ENCODE measurements at regions of chr13 and their contacts with region 1.

Region 1: GRCh38 chr13:112689303-112690165 is at the start of gene ATP11A:
- DNase-seq: peak; percentile 91
- ATAC-seq: peak; percentile 96
- H3K4me3 ChIP-seq: peak within 1 kb of the TSS; percentile 72
- H3K27ac ChIP-seq: peak within 1 kb of the TSS; percentile 40
- H3K4me1 ChIP-seq: peaks cover 14% of the 10 kb centered on the region
- H3K27me3 ChIP-seq: no peaks in the 10 kb centered on the region
- CTCF ChIP-seq: no peak
- POLR2A ChIP-seq: peak; percentile 92
- RAD21 ChIP-seq: peak; percentile 28; the same call in 1 of the 2 replicates
- total RNA-seq, gene ATP11A: 8.4 and 8.9 TPM in 2 replicates

Region 2: DNA sequence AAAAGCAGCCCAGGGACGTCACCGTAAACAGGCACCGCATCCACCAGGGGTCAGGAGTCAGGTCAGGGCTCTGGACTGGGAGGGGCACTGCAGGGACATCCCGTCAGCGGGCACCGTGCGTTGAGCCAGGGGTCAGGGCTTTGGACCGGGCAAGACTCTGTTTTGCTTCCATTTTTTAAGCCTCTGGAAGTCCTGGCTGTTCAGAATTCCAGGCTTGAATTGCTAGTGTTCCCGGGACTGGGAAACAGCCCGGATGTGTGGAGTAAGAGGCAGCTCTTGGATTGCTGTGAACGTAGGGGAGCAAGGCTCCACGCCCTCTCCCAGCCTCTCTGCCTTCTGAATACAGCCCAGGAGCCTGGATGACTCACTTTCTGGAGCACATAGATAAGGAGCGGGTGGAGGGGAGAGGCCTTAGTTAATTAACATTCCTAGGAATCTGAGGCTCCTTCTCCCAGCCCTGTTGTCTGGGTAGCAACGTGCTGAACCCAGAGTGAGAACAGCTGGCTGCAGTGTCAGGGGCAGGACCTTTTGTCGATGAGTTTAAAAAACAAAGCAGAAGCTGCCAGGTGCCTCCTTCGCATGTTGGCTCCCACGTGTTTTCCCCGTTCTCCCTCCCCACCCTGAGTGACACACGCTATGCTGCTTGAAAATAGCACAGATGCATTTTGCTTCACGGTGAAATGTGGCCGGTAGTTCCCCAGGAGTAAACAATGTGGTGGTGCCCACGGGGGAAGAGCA is 22.2 kb after region 1 on chr13:
- CTCF ChIA-PET with region 1: no interaction called
- POLR2A ChIA-PET with region 1: no interaction called
- dilution Hi-C with region 1: no loop called
- in situ Hi-C with region 1: no loop called
- intact Hi-C with region 1: loop called (anchors 2 kb)
- DNase-seq: peak; percentile 98
- ATAC-seq: peak; percentile 98
- H3K4me3 ChIP-seq: peak overlapping the region; percentile 9
- H3K27ac ChIP-seq: peak overlapping the region; percentile 83
- H3K4me1 ChIP-seq: peaks cover 18% of the 10 kb centered on the region
- H3K27me3 ChIP-seq: no peaks in the 10 kb centered on the region
- CTCF ChIP-seq: no peak; the same call in 1 of the 2 replicates
- POLR2A ChIP-seq: peak; percentile 55; the same call in 1 of the 2 replicates
- RAD21 ChIP-seq: no peak; the same call in 1 of the 2 replicates

Region 3: DNA sequence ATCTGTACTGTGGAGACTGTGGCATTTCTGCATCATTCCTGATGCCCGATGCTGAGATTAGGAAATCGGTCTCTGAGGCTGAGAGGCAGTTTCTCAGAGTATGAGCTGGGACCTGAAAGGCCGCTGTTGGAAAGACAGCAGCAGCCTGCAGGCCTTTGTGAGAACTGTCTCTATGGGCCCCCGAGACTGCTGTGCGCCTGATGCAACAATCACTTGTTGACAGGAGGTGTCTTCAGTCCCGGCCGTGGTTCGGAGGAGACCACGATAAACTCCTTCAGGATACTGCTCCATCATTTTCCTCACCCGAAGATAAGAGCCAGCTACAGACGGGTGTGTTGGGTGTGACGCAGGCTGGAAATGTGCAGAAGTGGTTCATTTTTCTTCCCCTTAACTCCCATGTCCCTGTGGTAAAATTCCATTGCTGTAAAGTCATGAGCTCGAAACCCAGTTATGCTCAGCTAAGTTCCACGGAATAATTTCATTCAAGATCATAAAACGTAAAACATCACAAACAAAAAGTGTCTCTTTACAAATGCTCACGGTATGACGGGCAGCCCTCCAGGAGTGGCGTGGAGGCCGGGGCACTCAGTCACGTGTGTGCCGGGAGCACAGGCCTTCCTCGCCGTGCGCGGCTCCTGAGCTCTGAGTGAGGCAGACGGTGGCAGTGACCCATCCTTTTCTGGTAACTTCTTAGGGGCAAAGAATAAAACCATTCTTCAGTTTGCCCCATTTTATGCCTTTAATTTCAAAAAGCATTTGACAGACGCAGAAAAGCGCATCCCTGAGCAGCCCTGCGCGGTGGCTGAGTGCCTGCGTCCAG is 72.9 kb after region 1 on chr13:
- CTCF ChIA-PET with region 1: no interaction called
- POLR2A ChIA-PET with region 1: no interaction called
- dilution Hi-C with region 1: no loop called
- in situ Hi-C with region 1: no loop called
- intact Hi-C with region 1: loop called (anchors 5 kb)
- DNase-seq: peak; percentile 80
- ATAC-seq: peak; percentile 71
- H3K4me3 ChIP-seq: no peak overlapping the region
- H3K27ac ChIP-seq: no peak overlapping the region; the same call in 1 of the 2 replicates
- H3K4me1 ChIP-seq: peaks cover 14% of the 10 kb centered on the region
- H3K27me3 ChIP-seq: no peaks in the 10 kb centered on the region
- CTCF ChIP-seq: 0 out of 2 replicates have a peak, but pooled peaks have one; percentile 7
- POLR2A ChIP-seq: no peak
- RAD21 ChIP-seq: peak; percentile 18; the same call in 1 of the 2 replicates

Region 4: DNA sequence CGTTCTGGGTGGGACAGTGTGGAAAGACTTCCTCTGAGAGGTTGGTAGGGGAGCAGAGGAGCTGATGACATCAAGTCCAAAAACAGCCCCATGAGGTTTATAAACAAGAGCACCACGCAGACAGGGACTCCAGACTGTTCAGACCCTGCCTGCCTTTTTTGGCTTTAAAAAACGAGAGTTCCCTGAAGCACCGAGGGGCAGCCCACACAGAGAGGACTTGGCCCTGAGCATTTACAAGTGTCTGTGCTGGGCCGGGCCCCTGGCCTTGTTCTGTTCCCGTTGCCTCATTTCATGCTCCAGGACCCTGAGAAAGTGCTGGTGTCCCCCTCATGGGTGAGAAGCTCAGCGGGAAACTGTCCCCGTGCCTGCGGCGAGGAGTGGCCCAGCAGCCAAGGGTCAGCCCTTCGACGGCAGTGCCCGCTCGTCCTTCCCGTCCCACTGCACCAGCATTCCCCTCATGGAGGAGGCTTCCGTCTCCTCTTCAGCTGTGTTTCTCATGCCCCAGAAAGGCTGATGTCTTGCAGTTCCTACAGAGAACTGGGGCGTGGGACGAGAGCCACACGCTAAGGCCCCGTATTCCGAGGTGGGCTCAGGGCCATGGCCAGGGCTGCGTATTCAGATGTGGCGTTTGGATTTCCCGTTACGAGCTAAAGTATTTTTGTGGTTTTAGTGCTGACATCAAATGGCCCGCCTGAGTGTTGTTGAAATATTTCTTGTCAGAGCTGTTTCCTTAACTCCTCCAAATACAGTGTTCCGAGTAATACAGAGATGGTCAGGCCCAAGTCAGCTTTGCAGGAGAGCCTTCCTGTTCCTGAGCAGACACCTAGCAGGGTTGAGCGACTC is 93.8 kb after region 1 on chr13:
- CTCF ChIA-PET with region 1: no interaction called
- POLR2A ChIA-PET with region 1: no interaction called
- dilution Hi-C with region 1: no loop called
- in situ Hi-C with region 1: no loop called
- intact Hi-C with region 1: loop called (anchors 5 kb)
- DNase-seq: peak; percentile 90
- ATAC-seq: peak; percentile 80
- H3K4me3 ChIP-seq: no peak overlapping the region
- H3K27ac ChIP-seq: peak overlapping the region; percentile 28
- H3K4me1 ChIP-seq: peaks cover 30% of the 10 kb centered on the region
- H3K27me3 ChIP-seq: no peaks in the 10 kb centered on the region
- CTCF ChIP-seq: no peak
- POLR2A ChIP-seq: peak; percentile 54; the same call in 1 of the 2 replicates
- RAD21 ChIP-seq: no peak

Region 5: GRCh38 chr13:112990783-112991182 is 301.2 kb after region 1 on chr13:
- CTCF ChIA-PET with region 1: no interaction called
- POLR2A ChIA-PET with region 1: no interaction called
- dilution Hi-C with region 1: no loop called
- in situ Hi-C with region 1: no loop called
- intact Hi-C with region 1: no loop called
- DNase-seq: no peak
- ATAC-seq: no peak
- H3K4me3 ChIP-seq: no peak overlapping the region
- H3K27ac ChIP-seq: no peak overlapping the region
- H3K4me1 ChIP-seq: no peaks in the 10 kb centered on the region
- H3K27me3 ChIP-seq: peaks cover 67% of the 10 kb centered on the region
- CTCF ChIP-seq: no peak
- POLR2A ChIP-seq: no peak
- RAD21 ChIP-seq: no peak

Measured in IMR-90 (cell line).